ENCODE measurements at regions of chr18 and their contacts with region 1.

Region 1: DNA sequence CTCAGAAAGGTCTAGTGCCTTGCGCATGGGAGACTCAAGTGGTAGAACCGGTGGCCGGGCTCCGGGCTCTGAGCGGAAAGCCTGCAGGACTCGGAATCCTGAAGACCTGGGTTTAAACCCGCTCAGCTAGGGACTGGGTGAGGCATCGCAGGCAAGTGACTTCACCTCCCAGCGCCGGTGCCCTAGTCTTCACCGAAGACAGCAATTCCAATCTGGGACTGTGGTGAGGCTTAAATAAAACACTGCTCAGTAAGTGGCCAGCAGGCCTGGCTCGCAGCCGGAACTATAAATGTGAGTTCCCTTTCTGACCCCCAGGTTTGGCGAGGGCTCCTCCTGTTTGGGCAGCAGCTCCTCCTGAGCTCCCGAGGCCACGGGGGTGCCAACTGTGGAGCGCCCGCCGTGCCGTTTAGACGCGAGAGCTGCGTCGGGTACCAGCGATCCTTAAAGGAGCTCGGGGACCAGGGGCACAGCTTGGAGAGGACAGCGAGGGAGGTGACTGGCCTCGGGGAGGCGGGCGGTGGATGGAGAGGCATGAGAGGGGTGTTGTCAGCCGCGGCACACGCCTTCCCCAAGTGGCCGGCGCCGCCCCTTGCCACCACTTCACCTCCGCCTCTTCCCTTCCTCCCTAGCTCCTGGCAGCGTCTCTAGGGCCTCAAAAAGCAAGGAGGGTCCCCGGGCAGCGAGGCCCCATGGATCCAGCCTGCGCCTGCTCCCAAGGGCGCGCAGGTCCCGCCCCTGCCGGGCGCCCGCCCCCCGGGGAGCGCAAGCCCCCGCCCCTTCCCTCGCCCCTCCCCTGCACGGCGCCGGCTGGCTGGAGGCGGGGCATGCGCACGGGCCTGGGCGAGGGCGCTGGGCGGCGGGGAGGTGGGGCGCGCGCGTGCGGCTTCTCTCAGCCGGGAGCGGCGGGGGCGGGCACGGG is 736 bp upstream of the MTCL1 start:
- DNase-seq: peak; percentile 87
- H3K4me3 ChIP-seq: peak overlapping the region; percentile 52 to 79 (median 66)
- H3K27ac ChIP-seq: peak overlapping the region; percentile 66
- H3K4me1 ChIP-seq: peaks cover 17% of the 10 kb centered on the region
- H3K27me3 ChIP-seq: no peaks in the 10 kb centered on the region
- CTCF ChIP-seq: no peak
- POLR2A ChIP-seq: peak; percentile 41

Region 2: GRCh38 chr18:8586956-8587355 is 117.7 kb before region 1 on chr18:
- CTCF ChIA-PET with region 1: no interaction called
- POLR2A ChIA-PET with region 1: no interaction called
- dilution Hi-C with region 1: no loop called
- intact Hi-C with region 1: no loop called
- DNase-seq: no peak
- H3K4me3 ChIP-seq: no peak overlapping the region
- H3K27ac ChIP-seq: no peak overlapping the region
- H3K4me1 ChIP-seq: no peaks in the 10 kb centered on the region
- H3K27me3 ChIP-seq: peaks cover 2 to 5% of the 10 kb centered on the region in 2 experiments
- CTCF ChIP-seq: no peak
- POLR2A ChIP-seq: no peak

Region 3: GRCh38 chr18:8654503-8655451 is 49.8 kb before region 1 on chr18:
- CTCF ChIA-PET with region 1: interaction called, 14 read pairs
- POLR2A ChIA-PET with region 1: no interaction called
- dilution Hi-C with region 1: no loop called
- intact Hi-C with region 1: loop called (anchors 2 kb)
- DNase-seq: peak; percentile 29
- H3K4me3 ChIP-seq: no peak overlapping the region
- H3K27ac ChIP-seq: no peak overlapping the region
- H3K4me1 ChIP-seq: peaks cover 2% of the 10 kb centered on the region
- H3K27me3 ChIP-seq: peaks cover 2 to 6% of the 10 kb centered on the region in 2 experiments
- CTCF ChIP-seq: peak; percentile 21 to 45
- POLR2A ChIP-seq: no peak

Region 4: GRCh38 chr18:8721716-8722115 is 17.1 kb after region 1 on chr18:
- CTCF ChIA-PET with region 1: interaction called, 21 read pairs
- POLR2A ChIA-PET with region 1: no interaction called
- dilution Hi-C with region 1: no loop called
- intact Hi-C with region 1: no loop called
- DNase-seq: no peak
- H3K4me3 ChIP-seq: no peak overlapping the region
- H3K27ac ChIP-seq: peak overlapping the region; percentile 35
- H3K4me1 ChIP-seq: no peaks in the 10 kb centered on the region
- H3K27me3 ChIP-seq: no peaks in the 10 kb centered on the region
- CTCF ChIP-seq: no peak
- POLR2A ChIP-seq: no peak

Region 5: DNA sequence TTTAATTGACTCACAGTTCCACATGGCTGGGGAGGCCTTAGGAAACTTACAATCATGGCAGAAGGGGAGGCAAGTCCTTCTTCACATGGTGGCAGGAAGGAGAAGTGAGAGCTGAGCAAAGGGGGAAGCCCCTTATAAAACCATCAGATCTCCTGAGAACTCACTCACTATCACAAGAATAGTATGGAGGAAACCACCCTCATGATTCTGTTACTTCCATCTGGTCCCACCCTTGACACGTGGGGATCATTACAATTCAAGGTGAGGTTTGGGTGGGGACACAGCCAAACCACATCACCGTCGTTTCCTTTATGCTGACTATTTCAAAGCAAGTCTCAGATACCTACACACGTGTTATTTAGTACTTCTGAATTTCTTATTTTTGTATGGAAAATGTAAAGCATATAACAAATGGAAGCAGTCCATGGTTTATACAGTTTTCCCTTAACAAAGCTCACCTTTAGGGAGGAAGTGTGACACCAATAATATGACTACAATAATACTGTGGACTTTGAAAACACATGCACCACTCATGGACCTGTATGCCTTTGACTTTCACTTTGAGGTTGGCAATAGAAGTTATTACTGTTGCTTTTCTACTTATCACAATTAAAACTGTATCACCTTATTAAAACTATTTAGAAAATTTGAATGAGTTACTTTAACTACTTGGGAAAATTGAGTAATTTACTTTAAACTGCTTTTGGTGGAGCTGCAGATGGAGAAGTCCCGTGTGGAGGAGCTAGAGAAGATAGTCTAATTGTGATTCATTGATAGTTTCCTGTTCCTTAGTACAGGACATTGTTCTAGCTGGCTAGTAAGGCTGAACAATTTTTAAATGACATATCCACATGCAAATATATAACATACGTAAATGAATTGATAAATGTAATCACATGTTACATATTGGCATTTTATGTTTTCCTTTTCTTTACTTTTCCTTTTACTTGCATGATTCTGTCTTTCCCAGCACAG is 38.1 kb after region 1 on chr18:
- CTCF ChIA-PET with region 1: interaction called, 21 read pairs
- POLR2A ChIA-PET with region 1: interaction called, 5 read pairs
- dilution Hi-C with region 1: no loop called
- intact Hi-C with region 1: loop called (anchors 1 kb)
- DNase-seq: peak; percentile 55
- H3K4me3 ChIP-seq: no peak overlapping the region
- H3K27ac ChIP-seq: peak overlapping the region; percentile 65
- H3K4me1 ChIP-seq: peaks cover 53% of the 10 kb centered on the region
- H3K27me3 ChIP-seq: no peaks in the 10 kb centered on the region
- CTCF ChIP-seq: no peak
- POLR2A ChIP-seq: no peak

Region 6: GRCh38 chr18:8786478-8787370 is 82.1 kb after region 1 on chr18:
- CTCF ChIA-PET with region 1: interaction called, 10 read pairs
- POLR2A ChIA-PET with region 1: no interaction called
- dilution Hi-C with region 1: no loop called
- intact Hi-C with region 1: no loop called
- DNase-seq: no peak
- H3K4me3 ChIP-seq: no peak overlapping the region
- H3K27ac ChIP-seq: peak overlapping the region; percentile 61
- H3K4me1 ChIP-seq: peaks cover 19% of the 10 kb centered on the region
- H3K27me3 ChIP-seq: no peaks in the 10 kb centered on the region
- CTCF ChIP-seq: no peak
- POLR2A ChIP-seq: no peak

Region 7: DNA sequence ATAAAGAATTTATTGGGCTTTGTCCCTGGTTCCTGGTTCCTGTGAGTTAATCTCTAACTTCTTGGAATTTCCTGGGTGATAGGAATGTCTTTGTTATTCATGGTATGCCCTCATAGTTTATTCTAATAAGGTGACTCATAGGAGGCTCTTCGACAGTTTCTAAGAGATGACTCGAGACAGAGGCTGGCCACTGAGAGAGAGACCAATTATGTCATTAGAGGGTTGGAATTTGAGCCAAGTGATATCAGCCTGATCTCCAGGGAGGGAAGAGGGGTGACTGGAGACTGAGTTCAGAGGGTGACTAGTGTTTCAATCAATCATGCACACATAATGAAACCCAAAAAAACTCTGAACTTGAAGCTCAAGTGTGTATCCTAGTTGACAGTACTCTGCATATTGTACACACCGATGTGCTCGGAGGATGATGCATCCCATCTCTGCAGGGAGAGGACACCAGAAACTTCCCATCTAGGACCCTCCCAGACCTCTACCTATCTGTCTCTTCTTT is 186.4 kb after region 1 on chr18:
- CTCF ChIA-PET with region 1: no interaction called
- POLR2A ChIA-PET with region 1: no interaction called
- dilution Hi-C with region 1: no loop called
- intact Hi-C with region 1: loop called (anchors 5 kb)
- DNase-seq: peak; percentile 83
- H3K4me3 ChIP-seq: no peak overlapping the region
- H3K27ac ChIP-seq: peak overlapping the region; percentile 67
- H3K4me1 ChIP-seq: peaks cover 21% of the 10 kb centered on the region
- H3K27me3 ChIP-seq: no peaks in the 10 kb centered on the region
- CTCF ChIP-seq: no peak
- POLR2A ChIP-seq: no peak

Region 8: GRCh38 chr18:9136315-9137155 is 431.9 kb after region 1 on chr18 and contains the start of gene ANKRD12:
- CTCF ChIA-PET with region 1: no interaction called
- POLR2A ChIA-PET with region 1: no interaction called
- dilution Hi-C with region 1: no loop called
- intact Hi-C with region 1: loop called (anchors 10 kb)
- DNase-seq: peak; percentile 99
- H3K4me3 ChIP-seq: peak within 1 kb of the TSS; percentile 50 to 86 (median 70)
- H3K27ac ChIP-seq: peak within 1 kb of the TSS; percentile 95
- H3K4me1 ChIP-seq: peaks cover 31% of the 10 kb centered on the region
- H3K27me3 ChIP-seq: no peaks in the 10 kb centered on the region
- CTCF ChIP-seq: no peak
- POLR2A ChIP-seq: peak; percentile 82
- total RNA-seq, gene ANKRD12: 25.1 and 25.4 TPM in 2 replicates

Measured in endothelial cell of umbilical vein (primary cell).